ENCODE measurements at regions of chr19 and their contacts with region 1.

Region 1: DNA sequence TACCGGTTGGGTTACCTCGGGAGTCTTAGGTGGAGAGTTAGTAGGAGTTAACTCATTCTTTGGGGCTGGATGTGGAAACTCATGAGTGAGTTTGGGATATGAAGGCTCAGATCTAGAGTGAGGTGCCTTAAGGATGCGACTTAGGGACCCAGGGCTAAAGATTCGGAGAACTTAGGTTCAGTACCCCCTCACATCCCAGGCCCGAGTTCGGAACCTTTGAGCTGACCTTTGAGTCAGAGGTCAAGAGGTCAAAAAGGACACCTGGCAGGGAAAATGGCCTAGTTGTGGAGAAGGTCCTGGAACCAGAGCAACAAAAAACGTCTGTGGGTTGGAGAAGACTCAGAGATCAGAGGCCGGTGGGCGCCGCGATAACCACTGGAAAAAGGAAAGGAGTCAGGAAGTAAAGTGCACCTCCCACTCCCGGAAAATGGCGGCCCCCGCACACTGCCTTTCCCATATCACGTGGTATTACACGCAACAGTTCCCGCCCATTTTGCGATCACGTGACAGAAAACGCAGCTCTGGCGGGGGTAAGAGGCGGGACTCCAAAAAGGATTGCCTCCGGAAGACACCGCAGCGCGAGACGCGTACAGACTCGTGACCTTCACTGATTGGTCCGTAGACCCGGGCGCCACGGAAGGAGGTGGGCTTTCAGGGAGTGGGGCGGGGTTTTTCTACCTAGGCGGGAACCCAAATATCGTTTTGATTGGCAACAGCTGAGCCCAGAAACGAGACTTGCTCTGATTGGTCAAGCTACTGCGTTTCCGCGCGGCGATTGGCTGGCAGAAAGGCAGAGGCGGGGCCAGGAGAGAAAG is at the start of gene ACTMAP:
- DNase-seq: peak; percentile 99
- H3K4me3 Mint-ChIP-seq: peak within 1 kb of the TSS; percentile 84
- H3K27ac Mint-ChIP-seq: peak within 1 kb of the TSS; percentile 92
- H3K4me1 Mint-ChIP-seq: peaks cover 43% of the 10 kb centered on the region
- H3K27me3 Mint-ChIP-seq: no peaks in the 10 kb centered on the region
- CTCF ChIP-seq: no peak
- total RNA-seq, gene ACTMAP: 17.8 and 20.2 TPM in 2 replicates

Region 2: DNA sequence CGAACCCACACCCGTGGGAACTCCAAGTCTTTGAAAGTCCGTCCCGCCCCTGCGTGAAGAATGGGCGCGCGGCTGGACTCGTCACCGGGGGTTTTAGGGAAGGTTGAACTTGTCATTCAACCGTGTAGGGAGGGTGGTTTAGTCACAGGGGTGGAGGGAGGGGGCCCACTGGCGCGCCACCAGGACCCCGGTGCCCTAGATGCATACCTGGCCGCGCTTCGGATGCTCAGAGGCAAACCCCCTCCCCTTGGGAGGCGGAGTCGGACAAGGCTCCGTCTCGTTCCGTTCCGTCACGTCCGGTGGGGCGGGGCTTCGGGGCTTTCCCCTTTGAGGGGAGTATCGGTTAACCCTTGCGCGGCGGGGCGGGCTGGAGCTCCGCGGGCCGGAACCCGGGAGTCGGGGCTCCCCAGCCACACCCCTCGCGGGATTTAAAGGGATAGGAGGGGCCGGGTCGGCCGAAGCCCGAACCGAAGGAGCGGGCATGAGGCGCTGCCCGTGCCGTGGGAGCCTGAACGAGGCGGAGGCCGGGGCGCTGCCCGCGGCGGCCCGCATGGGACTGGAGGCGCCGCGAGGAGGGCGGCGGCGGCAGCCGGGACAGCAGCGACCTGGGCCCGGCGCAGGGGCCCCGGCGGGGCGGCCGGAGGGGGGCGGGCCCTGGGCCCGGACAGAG is 33.5 kb before region 1 on chr19 and contains the starts of genes COQ8B and ITPKC:
- CTCF ChIA-PET with region 1: interaction called, 8 read pairs
- intact Hi-C with region 1: loop called (anchors 5 kb)
- DNase-seq: peak; percentile 100
- H3K4me3 Mint-ChIP-seq: peak within 1 kb of the TSS; percentile 78
- H3K27ac Mint-ChIP-seq: peak within 1 kb of the TSS; percentile 93
- H3K4me1 Mint-ChIP-seq: peaks cover 29% of the 10 kb centered on the region
- H3K27me3 Mint-ChIP-seq: no peaks in the 10 kb centered on the region
- CTCF ChIP-seq: no peak
- total RNA-seq, gene COQ8B: 55.9 and 62.7 TPM in 2 replicates
- total RNA-seq, gene ITPKC: 25.3 and 32.0 TPM in 2 replicates

Region 3: GRCh38 chr19:40798223-40798996 is 48.1 kb after region 1 on chr19:
- CTCF ChIA-PET with region 1: interaction called, 5 read pairs
- intact Hi-C with region 1: loop called (anchors 5 kb)
- DNase-seq: peak; percentile 100
- H3K4me3 Mint-ChIP-seq: peak overlapping the region; percentile 88
- H3K27ac Mint-ChIP-seq: peak overlapping the region; percentile 95
- H3K4me1 Mint-ChIP-seq: peaks cover 48% of the 10 kb centered on the region
- H3K27me3 Mint-ChIP-seq: no peaks in the 10 kb centered on the region
- CTCF ChIP-seq: peak; percentile 49

Measured in Calu3 (cell line).